AG04449 (cell line): ENCODE measurements at regions of chr13 and their contacts with region 1.

Region 1: GRCh38 chr13:98466634-98467236 is 110.2 kb downstream of the STK24 start:
- DNase-seq: no peak
- H3K4me3 ChIP-seq: no peak overlapping the region
- CTCF ChIP-seq: peak; percentile 77

Region 2: GRCh38 chr13:98454389-98454881 is 12.3 kb before region 1 on chr13:
- CTCF ChIA-PET with region 1: interaction called, 26 read pairs
- POLR2A ChIA-PET with region 1: interaction called, 4 read pairs
- DNase-seq: peak; percentile 76
- H3K4me3 ChIP-seq: no peak overlapping the region
- CTCF ChIP-seq: no peak

Region 3: GRCh38 chr13:98484289-98485219 is 17.8 kb after region 1 on chr13:
- CTCF ChIA-PET with region 1: interaction called, 22 read pairs
- POLR2A ChIA-PET with region 1: no interaction called
- DNase-seq: peak; percentile 87
- H3K4me3 ChIP-seq: no peak overlapping the region
- CTCF ChIP-seq: no peak